HEK293 (cell line): ENCODE measurements at regions of chr1 and their contacts with region 1.

Region 1: DNA sequence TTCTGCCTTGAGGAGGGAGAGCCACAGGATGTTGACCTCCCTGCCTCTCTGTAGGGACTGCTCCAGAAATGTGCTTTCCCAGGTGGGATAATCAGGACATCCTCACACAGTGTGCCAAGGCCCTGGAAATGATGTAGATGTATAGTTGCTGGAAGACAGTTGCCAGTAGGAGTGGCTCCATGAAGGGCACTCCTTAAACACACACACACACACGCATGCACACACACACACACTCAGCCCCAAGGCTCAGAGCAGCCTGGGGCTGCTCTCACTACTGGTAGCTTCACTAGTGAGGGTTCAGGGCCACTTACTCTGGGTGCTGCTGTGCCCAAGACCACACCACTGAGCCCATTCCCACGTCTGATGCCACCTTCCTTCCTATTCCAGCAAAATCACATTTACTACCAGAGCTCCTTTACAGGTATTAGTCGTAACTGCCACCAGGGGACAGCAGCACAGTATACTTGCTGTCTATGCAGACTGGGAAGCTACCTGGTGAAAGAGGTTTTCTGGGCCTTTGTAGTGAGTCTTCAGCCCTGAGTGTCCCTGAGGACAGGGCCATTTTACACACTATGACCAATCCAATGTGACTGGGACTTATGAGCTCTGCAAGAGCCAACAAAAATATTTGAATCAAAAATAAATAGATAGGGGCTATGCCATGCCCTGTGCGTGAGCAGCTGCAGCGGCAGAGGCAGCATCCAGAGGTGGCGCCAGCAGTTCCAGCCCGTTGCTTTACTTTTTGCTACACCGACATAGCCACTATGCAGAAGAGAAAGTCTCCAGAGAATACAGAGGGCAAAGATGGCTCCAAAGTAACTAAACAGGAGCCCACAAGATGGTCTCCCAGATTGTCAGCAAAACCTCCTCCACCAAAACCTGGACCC is 15.0 kb downstream of the CRNN start:
- H3K4me3 ChIP-seq: no peak overlapping the region
- H3K27ac ChIP-seq: no peak overlapping the region
- H3K4me1 ChIP-seq: peaks cover 6% of the 10 kb centered on the region
- CTCF ChIP-seq: peak; percentile 26; the same call in 1 of the 2 replicates

Region 2: GRCh38 chr1:152386940-152387339 is 12.1 kb before region 1 on chr1:
- CTCF ChIA-PET with region 1: interaction called, 26 read pairs
- POLR2A ChIA-PET with region 1: no interaction called
- H3K4me3 ChIP-seq: no peak overlapping the region
- H3K27ac ChIP-seq: no peak overlapping the region
- H3K4me1 ChIP-seq: no peaks in the 10 kb centered on the region
- CTCF ChIP-seq: no peak

Region 3: DNA sequence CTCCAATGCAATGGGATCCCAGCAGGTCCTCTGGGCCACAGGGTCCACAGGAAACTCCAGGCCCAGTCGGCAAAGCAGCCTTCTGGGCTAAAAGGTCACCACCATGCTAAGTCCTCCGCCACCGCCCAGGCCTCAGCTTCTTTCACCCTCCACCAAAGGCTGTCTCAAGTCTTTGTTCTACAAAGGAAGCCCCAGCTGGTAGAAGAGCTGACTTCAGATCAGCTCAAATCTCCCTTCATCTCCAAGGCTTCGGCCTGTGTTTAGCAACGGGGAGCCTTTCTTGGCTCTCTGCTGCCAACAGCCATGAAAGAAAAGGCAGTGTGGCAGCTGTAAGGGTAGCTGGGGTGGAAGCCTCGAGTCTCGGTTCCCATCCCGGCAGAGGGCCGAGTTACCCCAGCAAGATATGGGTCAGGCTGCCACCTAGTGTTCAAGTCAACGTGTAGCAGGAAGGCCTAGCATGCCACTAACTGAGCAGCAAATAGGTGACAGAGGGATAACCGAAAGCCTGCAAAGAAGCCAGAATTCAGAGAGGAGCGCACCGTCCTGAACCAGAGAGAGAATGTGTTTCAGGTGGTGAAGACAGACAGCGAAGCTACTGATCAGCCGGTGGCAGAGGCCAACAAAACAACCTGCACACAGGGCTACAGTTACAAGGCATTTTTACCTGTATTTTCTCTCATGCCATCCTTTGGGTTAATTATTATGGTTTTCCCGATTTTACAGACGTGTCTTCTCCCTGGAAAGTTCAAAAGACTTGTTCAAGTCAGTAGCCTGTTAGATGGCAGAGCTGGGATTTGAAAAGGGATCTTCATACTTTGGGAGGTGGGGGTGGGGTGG is 41.8 kb after region 1 on chr1:
- CTCF ChIA-PET with region 1: interaction called, 82 read pairs
- POLR2A ChIA-PET with region 1: interaction called, 4 read pairs
- H3K4me3 ChIP-seq: no peak overlapping the region
- H3K27ac ChIP-seq: no peak overlapping the region
- H3K4me1 ChIP-seq: no peaks in the 10 kb centered on the region
- CTCF ChIP-seq: peak; percentile 79

Region 4: GRCh38 chr1:152486400-152487006 is 87.4 kb after region 1 on chr1:
- CTCF ChIA-PET with region 1: no interaction called
- POLR2A ChIA-PET with region 1: no interaction called
- H3K4me3 ChIP-seq: no peak overlapping the region
- H3K27ac ChIP-seq: no peak overlapping the region
- H3K4me1 ChIP-seq: no peaks in the 10 kb centered on the region
- CTCF ChIP-seq: no peak